WTC11 (cell line): ENCODE measurements at regions of chr4 and their contacts with region 1.

Region 1: GRCh38 chr4:183407128-183407585 is 37.3 kb upstream of the CDKN2AIP start:
- DNase-seq: peak; percentile 95
- ATAC-seq: peak; percentile 93
- H3K4me3 Mint-ChIP-seq: peak overlapping the region; percentile 54
- H3K27ac Mint-ChIP-seq: 0 out of 2 replicates have a peak overlapping the region, but pooled peaks have one; percentile 72
- H3K4me1 Mint-ChIP-seq: peaks cover 14% of the 10 kb centered on the region
- H3K27me3 Mint-ChIP-seq: no peaks in the 10 kb centered on the region; the same call in 1 of the 2 replicates
- CTCF ChIP-seq: peak; percentile 91

Region 2: GRCh38 chr4:183430317-183430993 is 23.3 kb after region 1 on chr4:
- CTCF ChIA-PET with region 1: interaction called, 16 read pairs
- POLR2A ChIA-PET with region 1: no interaction called
- DNase-seq: peak; percentile 62
- ATAC-seq: peak; percentile 93
- H3K4me3 Mint-ChIP-seq: no peak overlapping the region
- H3K27ac Mint-ChIP-seq: peak overlapping the region; percentile 97
- H3K4me1 Mint-ChIP-seq: peaks cover 27% of the 10 kb centered on the region
- H3K27me3 Mint-ChIP-seq: peaks cover 14% of the 10 kb centered on the region
- CTCF ChIP-seq: no peak

Region 3: GRCh38 chr4:183444214-183445066 is 37.3 kb after region 1 on chr4 and contains the start of gene CDKN2AIP:
- CTCF ChIA-PET with region 1: interaction called, 16 read pairs
- POLR2A ChIA-PET with region 1: no interaction called
- DNase-seq: peak; percentile 91
- ATAC-seq: peak; percentile 82
- H3K4me3 Mint-ChIP-seq: peak within 1 kb of the TSS; percentile 92
- H3K27ac Mint-ChIP-seq: peak within 1 kb of the TSS; percentile 96
- H3K4me1 Mint-ChIP-seq: peaks cover 25% of the 10 kb centered on the region
- H3K27me3 Mint-ChIP-seq: no peaks in the 10 kb centered on the region
- CTCF ChIP-seq: no peak
- total RNA-seq, gene CDKN2AIP: 13.7 to 17.1 TPM (median 16.3 TPM) in 3 replicates

Region 4: GRCh38 chr4:183738961-183739360 is 331.8 kb after region 1 on chr4:
- CTCF ChIA-PET with region 1: no interaction called
- POLR2A ChIA-PET with region 1: no interaction called
- DNase-seq: no peak
- ATAC-seq: no peak
- H3K4me3 Mint-ChIP-seq: no peak overlapping the region
- H3K27ac Mint-ChIP-seq: no peak overlapping the region
- H3K4me1 Mint-ChIP-seq: no peaks in the 10 kb centered on the region
- H3K27me3 Mint-ChIP-seq: no peaks in the 10 kb centered on the region; the same call in 1 of the 2 replicates
- CTCF ChIP-seq: no peak